ENCODE measurements at regions of chr19 and their contacts with region 1.

Region 1: DNA sequence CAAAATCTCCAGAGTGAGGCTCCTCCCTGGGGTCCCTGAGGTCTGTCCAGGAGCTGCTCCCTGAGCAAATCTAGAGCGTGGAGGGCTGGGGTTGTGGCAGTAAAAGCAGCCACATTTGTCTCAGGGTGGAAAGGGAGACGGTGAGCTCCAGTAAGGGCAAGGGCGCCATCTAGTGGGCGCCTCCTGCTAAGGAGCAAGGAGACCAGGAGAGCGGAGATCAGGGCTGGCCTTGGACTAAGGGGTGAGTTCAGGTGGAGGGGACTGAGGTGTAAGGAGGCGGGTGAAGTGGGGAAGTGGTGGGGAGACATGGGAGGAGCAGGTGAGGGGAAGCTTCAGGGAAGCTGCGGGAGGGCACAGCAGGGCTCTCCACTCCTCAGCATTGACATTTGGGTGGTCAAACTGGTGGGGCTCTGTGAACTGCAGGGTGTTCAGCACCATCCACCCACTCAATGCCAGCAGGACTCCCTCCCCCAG is 5.3 kb upstream of the CEACAM21 start:
- DNase-seq: peak; percentile 59
- ATAC-seq: peak; percentile 99
- H3K4me3 ChIP-seq: no peak overlapping the region
- H3K27ac ChIP-seq: no peak overlapping the region
- H3K4me1 ChIP-seq: peaks cover 3 to 10% of the 10 kb centered on the region in 2 experiments; a peak in 3 of 4 replicates
- H3K27me3 ChIP-seq: peaks cover 60% of the 10 kb centered on the region
- CTCF ChIP-seq: peak; percentile 86 to 95 (median 91); a peak in 5 of 6 replicates
- POLR2A ChIP-seq: no peak
- RAD21 ChIP-seq: peak; percentile 85

Region 2: GRCh38 chr19:41321600-41322270 is 248.9 kb before region 1 on chr19:
- CTCF ChIA-PET with region 1: interaction called, 13 read pairs
- POLR2A ChIA-PET with region 1: no interaction called
- RAD21 ChIA-PET with region 1: no interaction called
- intact Hi-C with region 1: loop called (anchors 5 kb)
- DNase-seq: no peak
- ATAC-seq: peak; percentile 74
- H3K4me3 ChIP-seq: no peak overlapping the region
- H3K27ac ChIP-seq: peak overlapping the region; percentile 29; the same call in 1 of the 2 replicates
- H3K4me1 ChIP-seq: peaks cover 5 to 24% of the 10 kb centered on the region in 2 experiments; a peak in 3 of 4 replicates
- H3K27me3 ChIP-seq: no peaks in the 10 kb centered on the region
- CTCF ChIP-seq: peak; percentile 56 to 82 (median 68); a peak in 5 of 6 replicates
- POLR2A ChIP-seq: no peak
- RAD21 ChIP-seq: peak; percentile 44

Measured in HCT116 (cell line).